ENCODE measurements at regions of chr3 and their contacts with region 1.

Region 1: DNA sequence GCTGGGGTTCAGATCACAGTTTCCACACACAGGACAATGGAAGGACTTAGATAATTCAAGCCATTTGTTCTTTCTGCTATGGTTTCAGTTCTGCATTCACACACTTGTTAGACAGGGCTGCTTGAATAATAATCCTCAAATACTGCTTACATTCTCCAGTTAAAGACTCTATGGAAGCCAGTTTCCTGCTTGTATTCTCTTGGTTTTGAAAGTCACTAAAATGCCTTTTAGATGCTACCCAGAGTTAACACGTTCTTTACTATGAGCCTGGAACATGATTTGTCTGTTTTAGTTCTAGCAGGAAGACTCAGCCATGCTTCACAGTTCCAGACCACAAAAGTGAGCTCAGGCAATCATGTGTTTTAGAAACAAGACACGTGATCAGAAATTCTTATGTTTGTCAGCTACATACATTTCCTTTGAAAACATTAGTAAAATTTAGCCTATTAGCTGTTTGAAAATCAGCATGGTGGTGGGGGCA is 152.4 kb downstream of the LEKR1 start:
- DNase-seq: peak; percentile 83
- ATAC-seq: peak; percentile 98
- H3K4me3 ChIP-seq: no peak overlapping the region
- H3K27ac ChIP-seq: peak overlapping the region; percentile 93
- H3K4me1 ChIP-seq: peaks cover 20% of the 10 kb centered on the region
- H3K27me3 ChIP-seq: no peaks in the 10 kb centered on the region
- CTCF ChIP-seq: no peak
- EP300 ChIP-seq: peak; percentile 65 to 87
- POLR2A ChIP-seq: no peak
- RAD21 ChIP-seq: 0 out of 2 replicates have a peak, but pooled peaks have one; percentile 11

Region 2: GRCh38 chr3:156474560-156475389 is 503.7 kb before region 1 on chr3:
- CTCF ChIA-PET with region 1: no interaction called
- POLR2A ChIA-PET with region 1: no interaction called
- RAD21 ChIA-PET with region 1: no interaction called
- SMC1A ChIA-PET with region 1: no interaction called
- in situ Hi-C with region 1: no loop called
- intact Hi-C with region 1: no loop called
- DNase-seq: no peak
- ATAC-seq: peak; percentile 56
- H3K4me3 ChIP-seq: no peak overlapping the region
- H3K27ac ChIP-seq: no peak overlapping the region
- H3K4me1 ChIP-seq: no peaks in the 10 kb centered on the region
- H3K27me3 ChIP-seq: peaks cover 0 to 2% of the 10 kb centered on the region in 2 experiments; a peak in 3 of 4 replicates
- CTCF ChIP-seq: peak; percentile 30 to 40 (median 35); a peak in 5 of 6 replicates
- EP300 ChIP-seq: no peak
- POLR2A ChIP-seq: no peak
- RAD21 ChIP-seq: no peak

Region 3: DNA sequence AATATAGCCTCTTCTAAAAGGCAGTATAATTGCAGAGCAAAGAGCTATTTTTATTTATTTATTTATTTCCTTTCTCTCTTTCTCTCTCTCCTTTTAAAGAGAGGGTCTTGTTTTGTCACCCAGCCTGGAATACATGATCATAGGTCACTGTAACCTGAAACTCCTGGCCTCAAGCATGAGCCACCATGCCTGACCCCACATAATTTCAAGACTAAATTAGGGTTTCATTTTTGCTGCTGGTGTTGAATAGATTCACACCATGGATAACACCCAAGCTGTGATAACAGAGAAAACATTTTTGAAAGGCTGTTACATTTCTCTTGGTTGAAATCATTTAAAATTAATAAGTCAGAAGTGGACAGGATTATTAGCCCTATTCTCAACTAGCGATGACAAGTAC is 20.8 kb before region 1 on chr3:
- CTCF ChIA-PET with region 1: interaction called, 5 read pairs
- POLR2A ChIA-PET with region 1: no interaction called
- RAD21 ChIA-PET with region 1: interaction called, 5 read pairs
- SMC1A ChIA-PET with region 1: interaction called, 31 read pairs
- in situ Hi-C with region 1: no loop called
- intact Hi-C with region 1: no loop called
- DNase-seq: peak; percentile 54
- ATAC-seq: peak; percentile 100
- H3K4me3 ChIP-seq: 0 out of 2 replicates have a peak overlapping the region, but pooled peaks have one; percentile 1
- H3K27ac ChIP-seq: peak overlapping the region; percentile 22; the same call in 1 of the 2 replicates
- H3K4me1 ChIP-seq: peaks cover 12% of the 10 kb centered on the region
- H3K27me3 ChIP-seq: no peaks in the 10 kb centered on the region
- CTCF ChIP-seq: no peak
- EP300 ChIP-seq: peak; percentile 50 to 53; a peak in 2 of 4 replicates
- POLR2A ChIP-seq: no peak
- RAD21 ChIP-seq: peak; percentile 9; the same call in 1 of the 2 replicates

Region 4: GRCh38 chr3:156963096-156963495 is 15.4 kb before region 1 on chr3:
- CTCF ChIA-PET with region 1: interaction called, 5 read pairs
- POLR2A ChIA-PET with region 1: no interaction called
- RAD21 ChIA-PET with region 1: interaction called, 5 read pairs
- SMC1A ChIA-PET with region 1: interaction called, 31 read pairs
- in situ Hi-C with region 1: no loop called
- intact Hi-C with region 1: no loop called
- DNase-seq: no peak
- ATAC-seq: no peak
- H3K4me3 ChIP-seq: no peak overlapping the region
- H3K27ac ChIP-seq: no peak overlapping the region
- H3K4me1 ChIP-seq: peaks cover 5% of the 10 kb centered on the region
- H3K27me3 ChIP-seq: no peaks in the 10 kb centered on the region
- CTCF ChIP-seq: no peak
- EP300 ChIP-seq: no peak
- POLR2A ChIP-seq: no peak
- RAD21 ChIP-seq: no peak

Region 5: GRCh38 chr3:157064402-157064801 is 85.9 kb after region 1 on chr3:
- CTCF ChIA-PET with region 1: interaction called, 3 read pairs
- POLR2A ChIA-PET with region 1: interaction called, 3 read pairs
- RAD21 ChIA-PET with region 1: interaction called, 12 read pairs
- SMC1A ChIA-PET with region 1: interaction called, 8 read pairs
- in situ Hi-C with region 1: no loop called
- intact Hi-C with region 1: no loop called
- DNase-seq: peak; percentile 48
- ATAC-seq: peak; percentile 81
- H3K4me3 ChIP-seq: no peak overlapping the region
- H3K27ac ChIP-seq: peak overlapping the region; percentile 48; the same call in 1 of the 2 replicates
- H3K4me1 ChIP-seq: peaks cover 38% of the 10 kb centered on the region
- H3K27me3 ChIP-seq: no peaks in the 10 kb centered on the region
- CTCF ChIP-seq: no peak
- EP300 ChIP-seq: peak; percentile 46 to 59; a peak in 2 of 4 replicates
- POLR2A ChIP-seq: no peak
- RAD21 ChIP-seq: 0 out of 2 replicates have a peak, but pooled peaks have one; percentile 14

Region 6: DNA sequence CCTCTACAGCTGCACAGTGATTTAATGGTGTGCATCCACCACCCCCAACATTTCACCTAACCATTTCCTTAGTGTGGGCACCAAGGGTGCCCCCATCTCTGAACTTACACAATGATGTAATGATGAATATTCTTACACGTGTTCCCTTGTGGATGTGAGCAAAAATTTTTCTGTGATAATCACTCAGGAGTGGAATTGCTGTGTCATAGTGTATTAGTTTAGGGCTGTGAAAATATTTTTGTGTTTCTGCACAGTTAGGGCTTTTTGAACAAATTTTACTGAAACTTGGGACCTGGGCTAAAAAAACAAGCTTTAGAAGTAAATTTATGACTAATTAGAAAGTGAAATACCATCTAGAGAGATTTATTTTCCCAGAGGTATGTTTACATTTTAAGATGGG is 316.0 kb after region 1 on chr3:
- CTCF ChIA-PET with region 1: no interaction called
- POLR2A ChIA-PET with region 1: no interaction called
- RAD21 ChIA-PET with region 1: no interaction called
- SMC1A ChIA-PET with region 1: no interaction called
- in situ Hi-C with region 1: no loop called
- intact Hi-C with region 1: no loop called
- DNase-seq: no peak
- ATAC-seq: no peak
- H3K4me3 ChIP-seq: no peak overlapping the region
- H3K27ac ChIP-seq: no peak overlapping the region
- H3K4me1 ChIP-seq: no peaks in the 10 kb centered on the region
- H3K27me3 ChIP-seq: no peaks in the 10 kb centered on the region
- CTCF ChIP-seq: no peak
- EP300 ChIP-seq: no peak
- POLR2A ChIP-seq: no peak
- RAD21 ChIP-seq: no peak

Measured in GM12878 (cell line).